ENCODE measurements at regions of chr19 and their contacts with region 1.

Region 1: GRCh38 chr19:35592226-35592625 is 6.3 kb downstream of the PMIS2 start:
- DNase-seq: peak; percentile 50
- H3K4me3 Mint-ChIP-seq: no peak overlapping the region
- H3K27ac Mint-ChIP-seq: no peak overlapping the region
- H3K4me1 Mint-ChIP-seq: peaks cover 10% of the 10 kb centered on the region
- H3K27me3 Mint-ChIP-seq: peaks cover 22% of the 10 kb centered on the region

Region 2: GRCh38 chr19:35509861-35510625 is 82.2 kb before region 1 on chr19:
- CTCF ChIA-PET with region 1: interaction called, 10 read pairs
- DNase-seq: peak; percentile 79
- H3K4me3 Mint-ChIP-seq: no peak overlapping the region
- H3K27ac Mint-ChIP-seq: no peak overlapping the region
- H3K4me1 Mint-ChIP-seq: peaks cover 21% of the 10 kb centered on the region
- H3K27me3 Mint-ChIP-seq: peaks cover 94% of the 10 kb centered on the region

Region 3: DNA sequence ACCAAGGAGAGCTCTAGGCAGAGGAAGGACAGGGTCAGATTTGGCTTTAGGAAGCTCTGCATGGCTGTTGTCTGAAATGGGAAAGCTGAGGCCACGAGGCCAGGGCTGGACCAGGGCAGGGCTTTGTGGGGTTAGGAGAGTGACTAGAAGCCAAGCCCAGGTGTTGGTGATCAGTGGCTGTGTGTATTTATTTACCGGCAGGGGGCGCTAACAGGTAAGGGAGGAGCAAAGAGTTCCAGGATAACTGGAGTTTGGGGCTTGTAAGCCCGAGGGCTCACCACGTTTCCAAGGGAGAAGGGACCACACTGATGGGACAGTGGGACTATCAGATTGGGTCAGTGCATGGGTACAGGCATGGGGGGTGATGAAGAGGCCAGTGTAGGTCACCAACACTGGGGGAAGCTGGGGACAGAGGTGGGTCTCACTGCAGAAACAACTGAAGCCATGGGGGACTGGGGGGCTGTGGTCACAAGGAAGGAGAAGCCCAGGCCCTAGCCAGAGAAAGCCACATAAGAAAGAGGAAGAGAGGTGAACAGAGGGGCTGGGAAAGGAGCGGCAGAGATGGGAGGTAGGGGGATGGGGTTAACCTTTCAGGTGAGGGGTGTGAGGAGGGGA is 42.9 kb before region 1 on chr19:
- CTCF ChIA-PET with region 1: interaction called, 20 read pairs
- DNase-seq: peak; percentile 71
- H3K4me3 Mint-ChIP-seq: no peak overlapping the region
- H3K27ac Mint-ChIP-seq: no peak overlapping the region
- H3K4me1 Mint-ChIP-seq: peaks cover 32% of the 10 kb centered on the region
- H3K27me3 Mint-ChIP-seq: peaks cover 8% of the 10 kb centered on the region

Measured in activated naive CD4-positive, alpha-beta T cell treated with anti-CD3 and anti-CD28 coated beads, Interleukin-2, amount 10 ng/mL, durations not matched to agents 7 days and 5 days (primary cell).